ENCODE measurements at regions of chr19 and their contacts with region 1.

Region 1: DNA sequence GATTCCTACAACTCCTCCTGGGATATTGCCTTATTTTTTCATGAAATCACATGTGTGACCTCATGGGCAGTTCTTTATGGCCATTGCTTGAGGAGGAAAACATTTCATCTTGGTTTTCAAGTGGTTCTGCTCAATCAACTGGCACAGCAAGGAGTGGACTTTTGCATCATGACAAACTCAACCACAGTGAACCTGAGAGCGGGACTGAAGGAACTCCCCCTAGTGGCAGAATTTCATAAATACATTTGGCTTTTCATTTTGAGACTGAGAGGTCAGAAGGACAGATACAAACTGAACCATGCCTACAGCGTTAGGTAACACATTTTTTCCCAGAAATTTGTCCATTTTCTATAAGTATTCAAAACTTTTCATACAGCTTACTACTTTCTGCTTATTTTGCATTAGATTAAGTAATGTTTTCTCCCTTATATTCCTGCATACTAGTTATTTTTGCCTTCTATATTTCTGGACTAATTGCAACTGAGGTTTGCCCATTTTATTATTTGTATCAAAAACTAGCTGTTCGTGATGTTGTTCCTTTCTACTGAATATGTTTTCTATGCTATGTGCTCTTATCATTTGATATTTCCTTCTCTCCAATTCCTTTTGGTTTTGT is 13.4 kb upstream of the SIGLEC12 start:
- DNase-seq: peak; percentile 15
- H3K4me3 Mint-ChIP-seq: no peak overlapping the region
- H3K27ac Mint-ChIP-seq: no peak overlapping the region
- H3K4me1 Mint-ChIP-seq: peaks cover 17% of the 10 kb centered on the region
- H3K27me3 Mint-ChIP-seq: peaks cover 26% of the 10 kb centered on the region

Region 2: DNA sequence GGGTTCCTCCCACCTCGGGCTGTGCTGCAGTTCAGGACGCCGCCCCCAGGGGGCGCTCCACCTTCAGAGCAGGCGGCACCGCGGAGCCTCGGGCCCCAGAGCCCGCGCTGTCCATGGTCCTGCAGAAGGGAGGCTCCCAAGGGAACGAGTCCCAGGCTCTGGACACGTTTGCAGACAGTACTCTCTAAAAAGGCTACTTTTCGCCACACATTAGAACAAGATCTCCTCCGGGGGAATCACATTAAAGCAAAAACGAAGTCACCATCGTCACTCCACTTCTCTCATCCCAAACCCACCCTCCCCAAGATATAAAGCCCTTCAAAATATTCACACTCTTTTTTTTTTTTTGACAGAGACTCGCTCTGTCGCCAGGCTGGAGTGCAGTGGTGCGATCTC is 92.9 kb before region 1 on chr19:
- intact Hi-C with region 1: loop called (anchors 1 kb)
- DNase-seq: peak; percentile 78
- H3K4me3 Mint-ChIP-seq: no peak overlapping the region
- H3K27ac Mint-ChIP-seq: no peak overlapping the region
- H3K4me1 Mint-ChIP-seq: peaks cover 10% of the 10 kb centered on the region
- H3K27me3 Mint-ChIP-seq: peaks cover 26% of the 10 kb centered on the region

Measured in activated T-helper 1 cell treated with anti-CD3 and anti-CD28 coated beads, Interleukin-12 subunit alpha, Interleukin-12 subunit beta, Interleukin-2, Interleukin-4 antibody, amounts not matched to agents 30 ng/mL and 10 ng/mL and 1 ng/mL, durations not matched to agents 14 hours and 24 hours and 36 hours (primary cell).